ENCODE measurements at regions of chr7 and their contacts with region 1.

Region 1: DNA sequence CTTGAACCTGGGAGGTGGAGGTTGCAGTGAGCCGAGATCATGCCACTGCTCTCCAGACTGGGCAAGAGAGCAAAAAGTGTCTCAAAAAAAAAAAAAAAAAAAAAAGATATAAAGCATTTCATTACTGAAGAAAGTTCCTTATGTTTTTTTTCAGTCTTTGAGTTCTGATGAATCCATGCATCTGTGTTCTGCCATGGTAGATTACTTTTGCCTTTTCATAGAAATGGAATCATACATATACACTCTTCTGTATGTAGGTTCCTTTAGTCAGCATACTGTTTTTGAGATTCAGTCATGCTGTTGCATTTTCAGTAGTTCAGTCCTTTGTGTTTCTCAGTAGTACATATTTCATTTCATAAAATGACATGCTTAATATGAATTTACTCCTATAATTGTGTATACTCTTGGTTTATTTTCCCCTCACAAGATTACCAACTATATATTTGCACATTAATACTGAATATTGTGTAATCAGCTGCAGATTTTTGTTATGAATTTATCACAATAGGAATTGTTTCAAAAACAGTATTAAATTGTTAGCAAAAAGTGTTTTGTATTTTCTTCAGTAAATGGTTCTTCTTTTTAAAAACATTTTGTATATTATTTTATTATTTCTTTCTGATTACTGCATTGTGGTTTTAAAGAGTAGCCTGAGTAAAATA is 2.8 kb upstream of the ZNF777 start:
- DNase-seq: no peak
- H3K4me3 ChIP-seq: no peak overlapping the region
- H3K27ac ChIP-seq: no peak overlapping the region
- H3K4me1 ChIP-seq: peaks cover 8% of the 10 kb centered on the region
- H3K27me3 ChIP-seq: no peaks in the 10 kb centered on the region
- CTCF ChIP-seq: no peak

Region 2: DNA sequence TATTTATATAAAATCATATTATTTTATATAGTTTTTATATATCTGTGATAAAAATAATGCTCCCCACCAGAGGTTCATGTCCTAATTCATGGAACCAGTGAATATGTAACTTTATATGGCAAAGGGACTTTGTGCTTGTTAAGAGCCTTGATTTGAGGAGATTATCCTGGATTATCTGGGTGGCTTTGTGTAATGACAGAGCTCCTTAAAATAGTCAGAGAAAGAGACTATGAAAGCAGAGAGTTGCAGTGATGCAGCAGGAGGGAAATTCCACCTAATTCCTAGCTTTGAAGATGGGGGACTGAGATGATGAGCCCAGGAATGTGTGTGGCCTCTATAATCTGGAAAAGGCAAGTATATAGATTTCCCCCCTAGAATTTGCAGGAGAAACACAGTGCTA is 1907.3 kb before region 1 on chr7:
- CTCF ChIA-PET with region 1: no interaction called
- POLR2A ChIA-PET with region 1: no interaction called
- intact Hi-C with region 1: no loop called
- DNase-seq: no peak
- H3K4me3 ChIP-seq: no peak overlapping the region
- H3K27ac ChIP-seq: no peak overlapping the region
- H3K4me1 ChIP-seq: no peaks in the 10 kb centered on the region
- H3K27me3 ChIP-seq: no peaks in the 10 kb centered on the region
- CTCF ChIP-seq: no peak

Region 3: DNA sequence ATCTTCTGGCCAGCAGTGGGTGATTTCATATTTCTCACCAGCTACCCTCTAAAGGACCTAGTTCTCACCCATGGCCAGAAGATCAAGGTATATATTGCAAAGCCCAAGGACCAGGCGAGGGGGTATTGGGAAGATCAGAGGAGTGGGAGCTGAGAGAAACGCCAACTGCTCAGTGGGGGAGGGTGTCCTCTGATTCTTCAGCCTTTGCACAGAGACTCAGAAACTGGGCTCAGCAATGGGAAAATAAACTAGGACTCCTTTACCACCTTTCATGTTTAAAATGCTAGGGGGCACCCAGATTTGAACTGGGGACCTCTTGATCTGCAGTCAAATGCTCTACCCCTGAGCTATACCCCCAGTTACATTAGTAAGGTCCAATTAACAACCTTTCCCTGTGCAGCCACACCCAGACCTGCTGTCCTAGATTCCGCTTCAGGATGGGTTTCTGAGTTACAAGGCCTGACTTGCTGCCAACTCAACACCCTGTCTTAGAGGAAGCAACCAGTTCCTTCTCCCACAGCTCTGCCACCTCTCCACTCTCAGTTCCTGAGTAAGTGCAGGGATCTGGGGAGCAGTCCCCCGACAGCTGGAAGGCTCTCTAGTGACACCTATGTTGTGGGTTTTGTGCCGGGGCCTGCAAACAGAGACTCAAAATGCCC is 108.1 kb before region 1 on chr7:
- CTCF ChIA-PET with region 1: no interaction called
- POLR2A ChIA-PET with region 1: interaction called, 20 read pairs
- intact Hi-C with region 1: no loop called
- DNase-seq: peak; percentile 3
- H3K4me3 ChIP-seq: no peak overlapping the region
- H3K27ac ChIP-seq: no peak overlapping the region
- H3K4me1 ChIP-seq: no peaks in the 10 kb centered on the region
- H3K27me3 ChIP-seq: no peaks in the 10 kb centered on the region
- CTCF ChIP-seq: no peak

Region 4: GRCh38 chr7:149599636-149600206 is 136.1 kb after region 1 on chr7:
- CTCF ChIA-PET with region 1: no interaction called
- POLR2A ChIA-PET with region 1: no interaction called
- intact Hi-C with region 1: no loop called
- DNase-seq: no peak
- H3K4me3 ChIP-seq: no peak overlapping the region
- H3K27ac ChIP-seq: no peak overlapping the region
- H3K4me1 ChIP-seq: no peaks in the 10 kb centered on the region
- H3K27me3 ChIP-seq: no peaks in the 10 kb centered on the region
- CTCF ChIP-seq: no peak